Breast epithelium (tissue), 4 donors: ENCODE measurements at regions of chr2 and their contacts with region 1.

Region 1: DNA sequence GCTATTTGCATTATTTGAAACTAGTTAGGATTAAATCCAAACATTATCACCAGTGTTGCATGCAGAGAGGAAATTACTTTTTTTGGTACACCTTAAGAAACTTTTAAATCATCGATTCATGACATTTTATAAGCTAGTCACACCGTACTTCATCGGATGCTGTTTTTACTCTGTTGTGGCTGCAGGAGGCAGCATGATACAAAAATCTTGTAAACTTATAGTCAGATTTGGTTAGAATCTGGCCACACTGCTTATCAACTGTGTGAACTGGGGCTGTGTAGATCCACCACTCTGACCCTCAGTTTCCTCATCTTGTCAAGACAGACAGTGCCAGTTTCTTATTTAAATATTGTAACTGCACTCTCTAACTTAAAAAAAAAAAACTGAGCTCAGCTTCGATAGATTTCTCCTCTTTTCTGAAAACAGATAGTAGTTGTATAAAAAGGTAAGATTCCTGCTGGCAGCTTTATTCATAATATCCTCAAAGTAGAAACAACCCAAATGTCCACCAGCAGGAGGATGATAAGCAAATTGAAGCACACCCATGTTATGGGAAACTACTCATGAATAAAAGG is 77.8 kb downstream of the RAPGEF4 start:
- DNase-seq: no peak
- H3K4me3 ChIP-seq: no peak overlapping the region
- H3K27ac ChIP-seq: no peak overlapping the region
- H3K4me1 ChIP-seq: no peaks in the 10 kb centered on the region
- H3K27me3 ChIP-seq: no peaks in the 10 kb centered on the region
- CTCF ChIP-seq: peak in 1 of 3 donors; percentile 24
- POLR2A ChIP-seq: no peak

Region 2: DNA sequence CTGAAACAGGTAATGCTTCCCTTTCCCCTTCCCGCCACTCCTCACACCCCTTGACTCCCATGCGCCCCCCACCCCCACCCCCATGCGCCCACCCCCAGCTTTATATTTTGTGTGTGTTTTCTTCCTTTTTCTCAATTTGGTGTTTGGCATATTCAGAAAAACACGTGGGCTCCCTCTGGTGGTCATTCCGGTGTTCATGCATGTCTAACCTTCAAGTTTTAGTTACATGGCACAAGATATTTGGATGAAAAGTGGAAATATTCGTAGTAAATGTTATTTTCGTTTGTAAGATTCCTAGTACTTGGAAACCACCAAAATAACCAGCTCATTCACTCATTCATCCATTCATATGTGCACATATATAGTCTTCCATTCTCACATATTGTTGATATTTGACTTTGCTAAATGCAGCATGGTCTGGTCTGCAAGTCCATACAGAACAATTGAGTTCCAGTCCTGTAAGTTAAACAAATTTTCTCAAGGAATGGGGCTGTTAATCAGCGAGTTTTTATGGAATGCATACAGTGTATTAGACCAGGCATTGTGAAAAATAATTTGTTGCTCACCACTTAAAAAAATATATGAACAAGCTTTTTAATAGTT is 118.6 kb after region 1 on chr2:
- intact Hi-C with region 1: loop called (anchors 2 kb)
- DNase-seq: peak in 1 of 2 donors; percentile 25
- H3K4me3 ChIP-seq: peak overlapping the region in 2 of 3 donors; percentile 26 to 46
- H3K27ac ChIP-seq: peak overlapping the region; percentile 72 to 76
- H3K4me1 ChIP-seq: no peaks in the 10 kb centered on the region
- H3K27me3 ChIP-seq: no peaks in the 10 kb centered on the region
- CTCF ChIP-seq: peak; percentile 49 to 58 (median 57)
- POLR2A ChIP-seq: no peak

Region 3: GRCh38 chr2:173264603-173265366 is 451.4 kb after region 1 on chr2:
- intact Hi-C with region 1: loop called (anchors 5 kb)
- DNase-seq: no peak
- H3K4me3 ChIP-seq: no peak overlapping the region
- H3K27ac ChIP-seq: no peak overlapping the region
- H3K4me1 ChIP-seq: no peaks in the 10 kb centered on the region
- H3K27me3 ChIP-seq: no peaks in the 10 kb centered on the region
- CTCF ChIP-seq: no peak
- POLR2A ChIP-seq: no peak